ENCODE measurements at regions of chr11 and their contacts with region 1.

Region 1: GRCh38 chr11:131867457-131868257 is 497.2 kb downstream of the NTM start:
- DNase-seq: peak; percentile 47
- H3K4me3 ChIP-seq: no peak overlapping the region
- CTCF ChIP-seq: peak; percentile 90

Region 2: DNA sequence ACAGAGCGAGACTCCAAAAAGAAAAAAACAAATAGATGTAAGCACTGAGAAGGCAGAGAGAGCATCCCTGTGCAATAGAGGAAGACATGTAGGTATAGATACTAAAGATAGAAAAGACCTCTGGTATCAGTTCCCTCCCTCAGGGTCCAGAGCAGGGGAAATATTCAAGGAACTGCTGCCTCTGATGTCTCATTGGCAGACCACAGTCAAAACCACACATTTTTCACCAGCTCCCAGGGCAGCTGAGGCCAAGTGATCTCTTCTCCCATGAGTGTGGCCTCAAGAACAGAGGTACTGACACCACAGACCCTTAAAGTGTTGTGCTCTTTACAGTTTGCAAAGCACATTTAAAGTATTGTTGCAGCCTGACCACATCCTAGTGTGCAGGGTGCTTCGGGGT is 208.7 kb before region 1 on chr11:
- CTCF ChIA-PET with region 1: no interaction called
- POLR2A ChIA-PET with region 1: no interaction called
- DNase-seq: no peak
- H3K4me3 ChIP-seq: no peak overlapping the region
- CTCF ChIP-seq: no peak

Region 3: GRCh38 chr11:131688051-131688698 is 179.5 kb before region 1 on chr11:
- CTCF ChIA-PET with region 1: interaction called, 58 read pairs
- POLR2A ChIA-PET with region 1: no interaction called
- DNase-seq: no peak
- H3K4me3 ChIP-seq: peak overlapping the region; percentile 43
- CTCF ChIP-seq: peak; percentile 96

Region 4: GRCh38 chr11:131889146-131889577 is 21.5 kb after region 1 on chr11:
- CTCF ChIA-PET with region 1: interaction called, 27 read pairs
- POLR2A ChIA-PET with region 1: no interaction called
- DNase-seq: peak; percentile 80
- H3K4me3 ChIP-seq: no peak overlapping the region
- CTCF ChIP-seq: no peak

Region 5: DNA sequence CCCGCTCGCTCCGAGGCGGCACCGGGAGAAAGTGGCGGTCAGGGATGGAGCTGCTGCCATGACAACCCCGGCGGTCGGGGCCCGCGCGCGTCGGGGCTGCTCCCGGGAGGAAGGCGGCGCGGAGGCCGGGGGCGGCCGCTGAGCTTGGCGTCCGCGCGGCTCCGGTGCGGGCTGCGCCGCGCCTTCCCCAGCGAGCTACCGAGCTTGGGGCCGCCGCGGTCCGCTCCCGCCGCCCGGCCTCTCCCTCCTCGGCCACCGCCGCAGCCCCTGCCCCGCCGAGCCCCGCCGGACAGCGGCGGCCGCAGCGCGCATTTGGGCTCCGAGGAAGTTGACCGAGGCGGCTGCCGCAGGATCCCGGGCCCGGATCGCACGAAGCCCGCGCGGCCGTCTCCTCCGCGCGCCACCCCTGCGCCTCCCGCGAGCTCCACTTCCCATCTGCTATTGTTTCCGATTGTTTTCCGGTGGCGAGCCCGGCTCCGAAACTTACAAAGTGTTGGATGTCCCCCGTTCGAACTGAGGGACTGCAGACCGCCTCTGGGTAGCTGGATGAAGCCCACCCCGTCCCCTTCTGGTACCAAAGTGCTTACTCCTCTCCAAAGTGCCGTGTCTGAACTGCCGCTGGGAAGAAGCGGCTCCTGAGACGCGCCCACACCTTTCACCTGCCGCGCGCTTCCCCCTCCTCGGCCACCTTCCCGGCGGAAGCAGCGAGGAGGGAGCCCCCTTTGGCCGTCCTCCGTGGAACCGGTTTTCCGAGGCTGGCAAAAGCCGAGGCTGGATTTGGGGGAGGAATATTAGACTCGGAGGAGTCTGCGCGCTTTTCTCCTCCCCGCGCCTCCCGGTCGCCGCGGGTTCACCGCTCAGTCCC is 43.1 kb after region 1 on chr11:
- CTCF ChIA-PET with region 1: interaction called, 264 read pairs
- POLR2A ChIA-PET with region 1: interaction called, 6 read pairs
- DNase-seq: no peak
- H3K4me3 ChIP-seq: peak overlapping the region; percentile 82
- CTCF ChIP-seq: no peak

Region 6: GRCh38 chr11:132158093-132158492 is 290.4 kb after region 1 on chr11:
- CTCF ChIA-PET with region 1: interaction called, 11 read pairs
- POLR2A ChIA-PET with region 1: no interaction called
- DNase-seq: no peak
- H3K4me3 ChIP-seq: no peak overlapping the region
- CTCF ChIP-seq: peak; percentile 48

Measured in AG04449 (cell line).